ENCODE measurements at regions of chr16 and their contacts with region 1.

Region 1: GRCh38 chr16:4053301-4053845 is 62.9 kb downstream of the ADCY9 start:
- DNase-seq: peak; percentile 78 to 92
- ATAC-seq: peak; percentile 94 to 96 (median 94)
- H3K4me3 ChIP-seq: peak overlapping the region; percentile 48
- H3K27ac ChIP-seq: peak overlapping the region; percentile 94
- H3K4me1 ChIP-seq: peaks cover 23% of the 10 kb centered on the region
- H3K27me3 ChIP-seq: no peaks in the 10 kb centered on the region
- CTCF ChIP-seq: no peak

Region 2: DNA sequence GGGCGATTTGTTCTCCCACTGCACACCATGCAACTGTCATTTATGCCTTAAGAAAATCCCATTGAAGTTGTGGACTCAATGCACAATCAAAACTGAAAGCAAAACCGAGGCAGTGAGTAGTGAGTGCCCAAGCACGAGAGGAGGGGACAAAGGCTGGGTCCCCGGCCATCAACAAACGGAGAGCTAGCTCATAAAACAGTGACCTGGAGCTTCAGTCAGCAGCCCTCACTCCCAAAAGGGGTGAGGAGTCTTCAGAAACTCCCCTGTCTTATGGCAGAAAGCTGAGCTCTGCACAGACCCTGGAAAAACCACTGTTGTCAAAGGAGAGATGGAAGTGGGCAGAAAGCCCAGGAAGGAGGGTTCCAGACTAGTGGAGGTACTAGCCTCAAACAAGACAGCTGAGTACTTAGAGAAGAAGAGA is 34.0 kb before region 1 on chr16:
- intact Hi-C with region 1: loop called in 1 of 2 experiments (anchors 5 kb)
- DNase-seq: no peak
- ATAC-seq: peak in 2 of 4 donors; percentile 15 to 22
- H3K4me3 ChIP-seq: peak overlapping the region; percentile 51
- H3K27ac ChIP-seq: peak overlapping the region; percentile 50
- H3K4me1 ChIP-seq: peaks cover 27% of the 10 kb centered on the region
- H3K27me3 ChIP-seq: no peaks in the 10 kb centered on the region
- CTCF ChIP-seq: no peak